ENCODE measurements at regions of chr3 and their contacts with region 1.

Region 1: GRCh38 chr3:34011171-34012101 is 213.0 kb downstream of the PDCD6IP start:
- DNase-seq: no peak
- H3K4me3 ChIP-seq: no peak overlapping the region
- H3K27ac ChIP-seq: 0 out of 2 replicates have a peak overlapping the region, but pooled peaks have one; percentile 26
- H3K4me1 ChIP-seq: peaks cover 18% of the 10 kb centered on the region
- H3K27me3 ChIP-seq: no peaks in the 10 kb centered on the region
- CTCF ChIP-seq: no peak

Region 2: GRCh38 chr3:33980252-33980651 is 31.2 kb before region 1 on chr3:
- CTCF ChIA-PET with region 1: no interaction called
- POLR2A ChIA-PET with region 1: no interaction called
- intact Hi-C with region 1: no loop called
- DNase-seq: no peak
- H3K4me3 ChIP-seq: no peak overlapping the region
- H3K27ac ChIP-seq: no peak overlapping the region
- H3K4me1 ChIP-seq: no peaks in the 10 kb centered on the region
- H3K27me3 ChIP-seq: no peaks in the 10 kb centered on the region
- CTCF ChIP-seq: peak; percentile 56

Region 3: DNA sequence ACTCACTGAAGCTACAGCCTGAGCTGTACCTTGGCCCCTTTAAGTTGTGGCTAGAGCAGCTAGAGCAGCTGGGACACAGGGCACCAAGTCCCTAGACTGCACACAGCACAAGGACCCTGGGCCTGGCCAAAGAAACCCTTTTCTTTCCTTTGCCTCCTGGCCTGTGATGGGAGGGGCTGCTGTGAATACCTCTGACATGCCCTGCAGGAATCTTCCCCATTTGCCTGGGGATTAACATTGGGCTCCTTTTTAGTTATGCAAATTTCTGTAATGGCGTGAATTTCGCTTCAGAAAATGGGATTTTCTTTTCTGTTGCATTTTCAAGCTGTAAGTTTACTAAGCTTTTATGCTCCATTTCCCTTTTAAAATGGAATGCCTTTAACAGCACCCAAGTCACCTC is 1016.7 kb after region 1 on chr3:
- CTCF ChIA-PET with region 1: interaction called, 17 read pairs
- POLR2A ChIA-PET with region 1: no interaction called
- intact Hi-C with region 1: no loop called
- DNase-seq: no peak
- H3K4me3 ChIP-seq: no peak overlapping the region
- H3K27ac ChIP-seq: no peak overlapping the region
- H3K4me1 ChIP-seq: no peaks in the 10 kb centered on the region
- H3K27me3 ChIP-seq: no peaks in the 10 kb centered on the region
- CTCF ChIP-seq: no peak